GM12878 (cell line): ENCODE measurements at regions of chr4 and their contacts with region 1.

Region 1: GRCh38 chr4:80153874-80154544 is 43.3 kb upstream of the PRDM8 start:
- DNase-seq: no peak
- ATAC-seq: no peak
- H3K4me3 ChIP-seq: no peak overlapping the region
- H3K27ac ChIP-seq: no peak overlapping the region
- H3K4me1 ChIP-seq: no peaks in the 10 kb centered on the region
- H3K27me3 ChIP-seq: no peaks in the 10 kb centered on the region
- CTCF ChIP-seq: no peak
- EP300 ChIP-seq: no peak
- POLR2A ChIP-seq: no peak
- RAD21 ChIP-seq: no peak

Region 2: DNA sequence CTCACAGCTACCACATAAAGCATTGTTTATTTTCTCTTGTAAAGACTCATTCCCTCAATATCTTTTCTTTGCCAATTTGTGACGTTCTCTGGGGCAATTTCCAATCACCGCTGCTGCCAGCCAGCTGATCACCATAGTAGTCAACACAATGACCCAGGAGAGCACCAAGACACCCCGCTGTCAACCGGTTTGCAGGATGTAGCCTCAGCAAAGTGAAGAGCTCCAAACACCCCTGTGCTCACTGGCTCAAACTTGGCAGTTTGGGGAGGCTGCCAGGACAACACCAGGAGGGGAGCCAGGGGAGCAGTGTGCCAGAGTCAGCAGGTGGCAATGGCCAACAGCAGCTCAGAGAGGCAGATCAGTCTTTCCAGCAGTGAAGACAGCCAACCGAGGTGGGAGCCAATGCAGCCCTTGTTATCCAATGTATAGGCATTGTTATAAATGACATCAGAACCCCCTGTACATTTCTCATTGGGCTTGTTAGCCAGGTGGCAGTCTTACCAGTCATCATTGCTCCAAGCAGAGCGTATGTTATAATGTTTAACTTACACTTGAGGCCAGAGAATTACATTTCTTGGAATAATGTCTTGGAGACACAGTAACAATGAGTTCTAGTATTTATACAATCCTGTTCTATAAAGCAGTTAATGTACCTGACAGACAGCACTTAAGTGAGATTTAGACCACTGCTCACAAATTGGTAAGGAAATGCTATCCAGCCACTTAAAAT is 471.0 kb before region 1 on chr4:
- CTCF ChIA-PET with region 1: no interaction called
- POLR2A ChIA-PET with region 1: no interaction called
- RAD21 ChIA-PET with region 1: no interaction called
- SMC1A ChIA-PET with region 1: no interaction called
- in situ Hi-C with region 1: no loop called
- intact Hi-C with region 1: no loop called
- DNase-seq: no peak
- ATAC-seq: no peak
- H3K4me3 ChIP-seq: no peak overlapping the region
- H3K27ac ChIP-seq: no peak overlapping the region
- H3K4me1 ChIP-seq: no peaks in the 10 kb centered on the region
- H3K27me3 ChIP-seq: no peaks in the 10 kb centered on the region
- CTCF ChIP-seq: no peak
- EP300 ChIP-seq: no peak
- POLR2A ChIP-seq: no peak
- RAD21 ChIP-seq: no peak

Region 3: GRCh38 chr4:80138551-80139538 is 15.2 kb before region 1 on chr4:
- CTCF ChIA-PET with region 1: interaction called, 3 read pairs
- POLR2A ChIA-PET with region 1: interaction called, 3 read pairs
- RAD21 ChIA-PET with region 1: interaction called, 5 read pairs
- SMC1A ChIA-PET with region 1: interaction called, 10 read pairs
- in situ Hi-C with region 1: no loop called
- intact Hi-C with region 1: no loop called
- DNase-seq: peak; percentile 12
- ATAC-seq: peak; percentile 90
- H3K4me3 ChIP-seq: no peak overlapping the region
- H3K27ac ChIP-seq: no peak overlapping the region
- H3K4me1 ChIP-seq: peaks cover 3% of the 10 kb centered on the region; the same call in 1 of the 2 replicates
- H3K27me3 ChIP-seq: no peaks in the 10 kb centered on the region
- CTCF ChIP-seq: no peak
- EP300 ChIP-seq: no peak
- POLR2A ChIP-seq: no peak
- RAD21 ChIP-seq: no peak

Region 4: GRCh38 chr4:80173401-80173800 is 19.4 kb after region 1 on chr4:
- CTCF ChIA-PET with region 1: interaction called, 10 read pairs
- POLR2A ChIA-PET with region 1: interaction called, 3 read pairs
- RAD21 ChIA-PET with region 1: no interaction called
- SMC1A ChIA-PET with region 1: interaction called, 5 read pairs
- in situ Hi-C with region 1: no loop called
- intact Hi-C with region 1: no loop called
- DNase-seq: no peak
- ATAC-seq: peak; percentile 97
- H3K4me3 ChIP-seq: no peak overlapping the region
- H3K27ac ChIP-seq: no peak overlapping the region
- H3K4me1 ChIP-seq: peaks cover 15% of the 10 kb centered on the region
- H3K27me3 ChIP-seq: no peaks in the 10 kb centered on the region
- CTCF ChIP-seq: no peak
- EP300 ChIP-seq: 0 out of 4 replicates have a peak, but pooled peaks of 1 of the 2 experiments have one; percentile 4
- POLR2A ChIP-seq: no peak
- RAD21 ChIP-seq: no peak